Prostate gland (tissue), 2 donors: ENCODE measurements at regions of chr1 and their contacts with region 1.

Region 1: GRCh38 chr1:164558461-164559341 is at the start of gene PBX1:
- DNase-seq: peak; percentile 99
- H3K4me3 ChIP-seq: peak within 1 kb of the TSS; percentile 66 to 70
- H3K27ac ChIP-seq: peak within 1 kb of the TSS; percentile 87 to 90
- H3K4me1 ChIP-seq: no peaks in the 10 kb centered on the region
- H3K27me3 ChIP-seq: no peaks in the 10 kb centered on the region
- CTCF ChIP-seq: no peak
- POLR2A ChIP-seq: peak; percentile 82
- total RNA-seq, gene PBX1: 50.2 to 60.4 TPM

Region 2: DNA sequence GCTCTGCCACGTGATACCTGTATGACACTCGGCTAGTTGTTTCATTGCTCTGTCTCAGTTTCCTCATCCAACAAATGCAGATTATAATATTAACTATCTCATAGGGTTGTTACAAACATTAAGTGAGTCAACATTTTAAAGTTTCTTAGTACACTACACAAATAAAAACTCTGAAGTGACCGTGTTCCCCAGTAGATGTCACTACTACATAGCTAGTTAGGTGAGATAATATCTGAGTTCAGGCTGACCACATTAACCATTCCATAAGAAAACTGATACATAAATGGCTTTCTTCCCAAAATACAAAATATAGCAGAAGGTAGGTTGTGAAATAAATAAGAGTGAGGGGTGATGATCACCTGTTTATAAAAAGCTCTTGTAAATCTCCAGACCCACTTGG is 1022.9 kb before region 1 on chr1:
- intact Hi-C with region 1: loop called (anchors 10 kb)
- DNase-seq: no peak
- H3K4me3 ChIP-seq: no peak overlapping the region
- H3K27ac ChIP-seq: no peak overlapping the region
- H3K4me1 ChIP-seq: no peaks in the 10 kb centered on the region
- H3K27me3 ChIP-seq: no peaks in the 10 kb centered on the region
- CTCF ChIP-seq: peak in 3 of 4 experiments; percentile 27 to 59 (median 55)
- POLR2A ChIP-seq: no peak

Region 3: DNA sequence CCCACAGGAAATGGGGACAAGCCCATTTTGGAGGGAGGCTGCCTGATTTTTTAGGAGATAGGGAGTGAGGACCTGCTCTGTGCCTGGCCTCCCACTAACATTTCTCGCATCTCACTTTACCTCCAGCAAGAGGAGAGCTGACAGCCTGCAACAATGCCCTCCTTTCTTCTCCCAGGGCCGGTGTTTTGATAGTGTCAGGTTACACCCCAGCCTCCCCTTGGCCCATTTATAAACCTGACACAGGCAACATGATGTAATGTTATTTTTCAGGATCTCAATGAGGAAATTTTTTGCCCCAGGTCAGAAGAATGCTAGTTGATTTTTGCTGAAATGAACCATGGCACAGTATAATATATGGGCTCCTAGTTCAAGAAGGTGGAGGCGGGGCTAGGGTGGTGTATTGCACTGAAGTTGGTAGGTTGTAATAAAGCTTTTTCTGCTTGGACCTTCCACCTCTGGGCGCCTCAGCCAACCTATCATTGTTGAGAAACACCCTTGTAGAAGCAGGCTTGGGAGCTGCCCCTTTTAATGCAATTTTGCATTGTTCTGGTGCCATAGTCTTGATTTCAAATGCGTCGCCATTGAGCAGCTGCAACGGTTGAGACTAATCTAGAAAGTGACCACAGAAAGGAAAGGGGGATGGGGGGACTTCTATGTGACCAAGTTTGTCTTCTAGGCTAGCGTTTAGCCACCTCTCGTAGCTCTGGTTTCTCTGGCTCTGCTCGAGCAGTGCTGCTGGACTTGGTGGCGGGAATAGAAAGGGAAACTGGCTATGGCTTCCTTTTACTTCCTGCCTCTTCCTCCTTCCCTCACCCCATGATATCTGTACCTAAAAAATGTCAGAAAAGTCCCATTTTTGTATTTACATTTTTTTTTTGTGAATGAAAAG is 53.3 kb after region 1 on chr1:
- intact Hi-C with region 1: loop called (anchors 5 kb)
- DNase-seq: peak; percentile 86
- H3K4me3 ChIP-seq: no peak overlapping the region
- H3K27ac ChIP-seq: peak overlapping the region; percentile 67 to 73
- H3K4me1 ChIP-seq: peaks cover 3% of the 10 kb centered on the region
- H3K27me3 ChIP-seq: no peaks in the 10 kb centered on the region
- CTCF ChIP-seq: peak in 1 of 4 experiments; percentile 4
- POLR2A ChIP-seq: peak; percentile 8

Region 4: GRCh38 chr1:164786980-164787833 is 228.5 kb after region 1 on chr1:
- intact Hi-C with region 1: loop called (anchors 5 kb)
- DNase-seq: peak; percentile 89
- H3K4me3 ChIP-seq: no peak overlapping the region
- H3K27ac ChIP-seq: peak overlapping the region; percentile 48 to 51
- H3K4me1 ChIP-seq: peaks cover 18% of the 10 kb centered on the region
- H3K27me3 ChIP-seq: no peaks in the 10 kb centered on the region
- CTCF ChIP-seq: peak; percentile 87 to 95 (median 92)
- POLR2A ChIP-seq: no peak